Activated B cell treated with CpG ODN at 0.5 μM for 24 hours (primary cell): ENCODE measurements at regions of chrX and their contacts with region 1.

Region 1: GRCh38 chrX:150772150-150772970 is 79.2 kb downstream of the MTMR1 start:
- DNase-seq: peak; percentile 60
- ATAC-seq: peak; percentile 66
- H3K4me3 Mint-ChIP-seq: no peak overlapping the region
- H3K27ac Mint-ChIP-seq: no peak overlapping the region
- H3K4me1 Mint-ChIP-seq: no peaks in the 10 kb centered on the region
- H3K27me3 Mint-ChIP-seq: no peaks in the 10 kb centered on the region
- CTCF ChIP-seq: no peak

Region 2: GRCh38 chrX:151082076-151082948 is 310.0 kb after region 1 on chrX:
- CTCF ChIA-PET with region 1: interaction called, 83 read pairs
- POLR2A ChIA-PET with region 1: no interaction called
- intact Hi-C with region 1: loop called (anchors 1 kb)
- DNase-seq: peak; percentile 45
- ATAC-seq: peak; percentile 83
- H3K4me3 Mint-ChIP-seq: peak overlapping the region; percentile 19
- H3K27ac Mint-ChIP-seq: no peak overlapping the region
- H3K4me1 Mint-ChIP-seq: peaks cover 6% of the 10 kb centered on the region
- H3K27me3 Mint-ChIP-seq: peaks cover 9% of the 10 kb centered on the region
- CTCF ChIP-seq: no peak

Region 3: DNA sequence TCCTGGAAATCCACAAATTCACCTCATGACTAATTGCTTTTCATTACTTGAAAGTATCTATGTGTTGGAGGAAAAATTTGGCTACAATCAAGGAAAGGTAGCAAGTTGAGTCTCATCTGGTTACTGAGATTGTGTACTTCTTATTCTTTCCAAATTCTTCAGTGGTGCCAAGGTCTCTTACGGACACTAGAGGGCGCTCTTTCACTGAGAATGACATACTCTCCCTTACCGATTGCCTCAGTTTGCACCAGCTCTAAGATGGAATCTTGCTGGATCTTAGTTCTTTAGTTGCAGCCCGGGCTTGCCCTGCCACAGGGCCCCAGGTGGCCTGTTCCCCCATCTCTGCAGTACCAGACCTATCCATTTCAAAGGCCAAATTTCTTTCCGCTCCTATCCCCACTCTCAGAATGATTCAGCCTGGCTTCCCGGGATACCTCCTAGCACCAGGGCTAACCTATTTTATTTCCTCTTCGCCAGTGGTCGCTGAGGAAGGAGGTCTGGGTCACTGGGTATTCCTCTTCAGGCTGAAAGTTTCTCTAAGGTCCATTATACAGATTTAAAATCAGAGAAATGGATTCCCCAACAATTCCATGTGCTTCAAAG is 379.4 kb after region 1 on chrX:
- CTCF ChIA-PET with region 1: no interaction called
- POLR2A ChIA-PET with region 1: no interaction called
- intact Hi-C with region 1: loop called (anchors 1 kb)
- DNase-seq: no peak
- ATAC-seq: no peak
- H3K4me3 Mint-ChIP-seq: no peak overlapping the region
- H3K27ac Mint-ChIP-seq: no peak overlapping the region
- H3K4me1 Mint-ChIP-seq: no peaks in the 10 kb centered on the region
- H3K27me3 Mint-ChIP-seq: peaks cover 4% of the 10 kb centered on the region
- CTCF ChIP-seq: no peak

Region 4: DNA sequence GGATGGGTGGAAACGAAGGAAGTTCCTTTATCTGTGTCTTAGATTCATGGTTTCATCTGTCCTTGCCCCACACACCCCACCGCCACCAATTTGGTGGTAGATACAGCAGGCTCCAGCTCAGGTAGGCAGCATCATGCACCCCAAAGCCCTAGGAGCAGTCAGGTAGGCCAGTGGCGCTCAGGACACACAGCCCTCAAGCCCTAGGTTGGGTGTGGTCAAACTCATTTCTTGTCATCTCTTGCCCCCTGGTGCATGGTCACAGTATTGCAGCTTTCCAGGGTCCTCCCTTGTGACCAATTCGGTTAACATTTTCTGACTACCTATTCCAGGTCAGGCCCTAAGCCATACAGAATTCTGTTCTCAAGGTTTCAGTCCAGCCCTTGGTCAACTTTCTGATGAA is 908.4 kb after region 1 on chrX:
- CTCF ChIA-PET with region 1: no interaction called
- POLR2A ChIA-PET with region 1: no interaction called
- intact Hi-C with region 1: loop called (anchors 5 kb)
- DNase-seq: peak; percentile 15
- ATAC-seq: no peak
- H3K4me3 Mint-ChIP-seq: no peak overlapping the region
- H3K27ac Mint-ChIP-seq: no peak overlapping the region
- H3K4me1 Mint-ChIP-seq: no peaks in the 10 kb centered on the region
- H3K27me3 Mint-ChIP-seq: no peaks in the 10 kb centered on the region
- CTCF ChIP-seq: no peak